ENCODE measurements at regions of chr3 and their contacts with region 1.

Region 1: GRCh38 chr3:141094790-141095545 is 43.8 kb downstream of the SPSB4 start:
- DNase-seq: peak; percentile 52 to 93
- H3K4me3 ChIP-seq: peak overlapping the region; percentile 15 to 46
- H3K27ac ChIP-seq: peak overlapping the region; percentile 63 to 73
- H3K4me1 ChIP-seq: peaks cover 3 to 27% of the 10 kb centered on the region in 2 donors
- H3K27me3 ChIP-seq: no peaks in the 10 kb centered on the region
- CTCF ChIP-seq: no peak

Region 2: GRCh38 chr3:140941434-140942220 is 153.3 kb before region 1 on chr3 and contains the start of gene SLC25A36:
- intact Hi-C with region 1: no loop called
- DNase-seq: peak; percentile 92 to 98
- H3K4me3 ChIP-seq: peak within 1 kb of the TSS; percentile 73 to 99
- H3K27ac ChIP-seq: peak within 1 kb of the TSS; percentile 99
- H3K4me1 ChIP-seq: peaks cover 0 to 15% of the 10 kb centered on the region in 2 donors
- H3K27me3 ChIP-seq: no peaks in the 10 kb centered on the region
- CTCF ChIP-seq: peak in 1 of 3 experiments; percentile 4
- total RNA-seq, gene SLC25A36: 19.1 TPM

Region 3: DNA sequence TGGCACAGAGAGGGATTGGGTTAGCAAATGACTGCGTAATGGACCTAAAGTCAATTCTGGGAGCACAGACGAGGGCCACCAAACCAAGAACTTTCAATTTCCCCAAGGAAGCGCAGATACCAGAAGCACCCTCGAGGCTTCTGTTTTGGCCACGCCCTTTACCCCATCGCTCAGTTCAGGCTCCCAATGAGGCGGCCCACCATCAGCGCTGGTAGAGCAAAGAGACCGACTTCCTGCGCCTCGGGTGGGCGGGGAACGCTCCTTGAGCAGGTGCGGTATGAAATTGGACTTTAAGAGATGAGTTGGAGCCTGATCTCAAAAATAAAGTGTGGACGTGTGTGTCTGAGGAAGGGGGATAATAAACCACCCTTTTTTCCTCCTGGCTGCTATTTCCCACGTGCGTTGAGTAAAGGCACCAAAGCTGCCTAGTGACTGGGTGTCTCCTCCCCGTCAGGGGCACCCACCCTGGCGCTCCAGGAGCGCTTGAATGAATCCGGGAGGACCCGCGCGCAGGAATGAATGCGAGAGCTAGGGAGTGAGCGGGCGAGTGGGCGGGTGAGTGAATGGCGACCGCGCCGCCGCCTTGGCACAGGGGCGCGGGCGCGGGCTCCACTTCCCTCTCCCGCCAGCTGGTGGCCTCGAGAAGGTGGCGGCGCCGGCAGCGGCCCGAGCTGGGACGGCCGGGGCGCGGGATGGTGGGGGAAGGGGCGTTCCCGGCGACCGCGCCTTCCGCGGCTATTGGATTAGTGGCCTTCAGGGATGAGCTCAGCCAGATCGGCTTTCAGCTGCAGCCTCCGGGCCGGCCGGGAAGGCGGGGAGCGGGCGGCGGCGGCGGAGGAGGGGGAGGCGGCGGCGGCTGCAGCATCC is 44.2 kb before region 1 on chr3 and contains the start of gene SPSB4:
- intact Hi-C with region 1: loop called (anchors 5 kb)
- DNase-seq: peak in 1 of 2 donors; percentile 74
- H3K4me3 ChIP-seq: peak within 1 kb of the TSS; percentile 63 to 85
- H3K27ac ChIP-seq: peak within 1 kb of the TSS in 1 of 2 donors; percentile 61
- H3K4me1 ChIP-seq: peaks cover 0 to 4% of the 10 kb centered on the region in 2 donors
- H3K27me3 ChIP-seq: no peaks in the 10 kb centered on the region
- CTCF ChIP-seq: peak in 2 of 3 experiments; percentile 28 to 57
- total RNA-seq, gene SPSB4: not detected

Measured in ascending aorta (tissue), 2 donors.